ENCODE measurements at regions of chr10 and their contacts with region 1.

Region 1: DNA sequence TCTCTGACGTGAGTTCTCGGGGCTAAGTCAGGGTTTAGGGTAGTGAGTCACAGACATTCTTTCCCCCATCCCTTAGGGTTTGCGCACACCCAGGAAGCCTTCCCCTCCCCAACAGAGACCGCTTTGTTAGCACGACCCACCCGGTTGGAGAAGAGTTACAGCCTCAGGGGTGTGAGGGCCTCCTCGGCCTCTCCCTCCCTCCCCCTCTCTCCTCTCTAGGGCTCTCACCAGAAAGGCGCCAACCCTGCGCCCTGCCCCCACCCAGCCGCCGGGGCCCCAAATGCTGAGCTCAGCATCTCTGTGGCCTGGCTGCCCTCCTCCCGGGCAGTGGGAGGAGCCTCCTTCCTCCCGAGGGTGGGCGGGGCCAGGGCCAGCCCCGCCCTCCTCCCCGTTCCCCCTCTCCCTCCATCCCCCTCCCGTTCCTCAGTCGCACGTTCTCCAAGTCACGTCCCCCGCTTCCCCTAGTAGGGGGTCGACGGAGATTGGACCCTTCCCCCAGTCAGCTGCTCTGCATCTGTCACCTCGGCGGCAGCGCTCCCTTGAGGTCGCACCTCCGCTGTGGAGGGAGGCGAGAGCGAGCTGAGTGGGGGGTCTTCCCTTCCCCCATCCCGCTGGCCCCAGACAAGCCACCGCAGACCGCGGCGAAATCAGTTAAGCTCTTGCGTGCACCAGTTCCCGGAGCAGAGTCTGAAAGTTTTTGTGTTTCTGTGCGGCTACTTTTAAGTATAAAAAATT is 13.0 kb upstream of the DDIT4 start:
- DNase-seq: peak; percentile 92
- H3K4me3 Mint-ChIP-seq: peak overlapping the region; percentile 73
- H3K27ac Mint-ChIP-seq: peak overlapping the region; percentile 97
- H3K4me1 Mint-ChIP-seq: peaks cover 77% of the 10 kb centered on the region
- H3K27me3 Mint-ChIP-seq: peaks cover 5% of the 10 kb centered on the region

Region 2: GRCh38 chr10:72248468-72249151 is 12.1 kb before region 1 on chr10:
- CTCF ChIA-PET with region 1: interaction called, 16 read pairs
- DNase-seq: peak; percentile 86
- H3K4me3 Mint-ChIP-seq: peak overlapping the region; percentile 79
- H3K27ac Mint-ChIP-seq: peak overlapping the region; percentile 99
- H3K4me1 Mint-ChIP-seq: peaks cover 86% of the 10 kb centered on the region
- H3K27me3 Mint-ChIP-seq: no peaks in the 10 kb centered on the region

Region 3: GRCh38 chr10:72414642-72415041 is 153.9 kb after region 1 on chr10:
- CTCF ChIA-PET with region 1: no interaction called
- DNase-seq: no peak
- H3K4me3 Mint-ChIP-seq: no peak overlapping the region
- H3K27ac Mint-ChIP-seq: no peak overlapping the region
- H3K4me1 Mint-ChIP-seq: no peaks in the 10 kb centered on the region
- H3K27me3 Mint-ChIP-seq: no peaks in the 10 kb centered on the region

Region 4: GRCh38 chr10:72802763-72803505 is 542.2 kb after region 1 on chr10:
- CTCF ChIA-PET with region 1: no interaction called
- DNase-seq: no peak
- H3K4me3 Mint-ChIP-seq: no peak overlapping the region
- H3K27ac Mint-ChIP-seq: no peak overlapping the region
- H3K4me1 Mint-ChIP-seq: peaks cover 10% of the 10 kb centered on the region
- H3K27me3 Mint-ChIP-seq: peaks cover 3% of the 10 kb centered on the region